CD8-positive, alpha-beta T cell (primary cell): ENCODE measurements at regions of chr16 and their contacts with region 1.

Region 1: GRCh38 chr16:12067714-12068401 is 91.3 kb downstream of the SNX29 start:
- DNase-seq: peak in 8 of 9 experiments; percentile 38 to 80 (median 56)
- ATAC-seq: peak; percentile 96
- H3K4me3 ChIP-seq: no peak overlapping the region
- H3K4me3 Mint-ChIP-seq: no peak overlapping the region
- H3K27ac ChIP-seq: no peak overlapping the region
- H3K27ac Mint-ChIP-seq: no peak overlapping the region
- H3K4me1 ChIP-seq: no peaks in the 10 kb centered on the region
- H3K4me1 Mint-ChIP-seq: peaks cover 4% of the 10 kb centered on the region
- H3K27me3 ChIP-seq: no peaks in the 10 kb centered on the region
- H3K27me3 Mint-ChIP-seq: no peaks in the 10 kb centered on the region
- CTCF ChIP-seq: peak; percentile 85

Region 2: DNA sequence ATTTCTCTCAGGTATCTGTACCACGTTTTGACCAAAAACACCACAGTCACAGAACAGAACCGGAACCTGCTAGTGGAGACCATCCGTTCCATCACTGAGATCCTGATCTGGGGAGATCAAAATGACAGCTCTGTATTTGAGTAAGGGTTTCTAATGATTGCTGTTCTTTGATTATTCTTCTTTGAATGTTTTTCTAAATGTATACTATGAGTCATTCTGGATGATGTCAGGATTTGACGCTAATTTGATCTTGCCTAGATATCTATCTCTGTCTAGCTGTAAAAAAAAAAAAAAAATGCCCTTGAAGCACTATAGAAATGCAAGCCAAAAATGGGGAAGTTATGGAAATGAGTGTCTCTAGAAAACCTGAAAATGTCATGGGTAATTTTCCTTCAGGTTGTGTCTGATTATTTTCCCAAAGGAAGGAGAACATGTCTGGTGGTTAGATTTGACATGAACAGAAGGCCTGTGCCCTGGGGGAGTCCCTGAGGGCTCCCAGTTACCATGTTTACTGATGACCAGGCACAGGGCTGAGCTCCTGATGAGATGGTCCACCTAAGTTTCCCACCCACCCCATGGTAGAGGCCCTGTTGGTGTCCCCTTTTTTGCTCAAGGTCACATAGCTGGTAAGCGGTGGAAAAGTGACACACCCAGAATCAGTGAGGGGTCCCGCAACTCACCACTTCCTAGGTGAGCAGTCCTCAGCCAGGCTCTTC is 1109.9 kb before region 1 on chr16:
- CTCF ChIA-PET with region 1: no interaction called
- POLR2A ChIA-PET with region 1: no interaction called
- intact Hi-C with region 1: loop called in 1 of 2 experiments (anchors 5 kb)
- DNase-seq: no peak
- ATAC-seq: peak; percentile 48
- H3K4me3 ChIP-seq: no peak overlapping the region
- H3K4me3 Mint-ChIP-seq: no peak overlapping the region
- H3K27ac ChIP-seq: no peak overlapping the region
- H3K27ac Mint-ChIP-seq: peak overlapping the region; percentile 47
- H3K4me1 ChIP-seq: peaks cover 14% of the 10 kb centered on the region
- H3K4me1 Mint-ChIP-seq: peaks cover 32% of the 10 kb centered on the region
- H3K27me3 ChIP-seq: no peaks in the 10 kb centered on the region
- H3K27me3 Mint-ChIP-seq: no peaks in the 10 kb centered on the region
- CTCF ChIP-seq: no peak

Region 3: GRCh38 chr16:11757671-11758545 is 309.9 kb before region 1 on chr16:
- CTCF ChIA-PET with region 1: no interaction called
- POLR2A ChIA-PET with region 1: no interaction called
- intact Hi-C with region 1: loop called in 1 of 2 experiments (anchors 10 kb)
- DNase-seq: no peak
- ATAC-seq: no peak
- H3K4me3 ChIP-seq: no peak overlapping the region
- H3K4me3 Mint-ChIP-seq: no peak overlapping the region
- H3K27ac ChIP-seq: no peak overlapping the region
- H3K27ac Mint-ChIP-seq: no peak overlapping the region
- H3K4me1 ChIP-seq: no peaks in the 10 kb centered on the region
- H3K4me1 Mint-ChIP-seq: no peaks in the 10 kb centered on the region
- H3K27me3 ChIP-seq: no peaks in the 10 kb centered on the region
- H3K27me3 Mint-ChIP-seq: no peaks in the 10 kb centered on the region
- CTCF ChIP-seq: no peak

Region 4: GRCh38 chr16:11949527-11949926 is 118.3 kb before region 1 on chr16:
- CTCF ChIA-PET with region 1: interaction called, 37 read pairs
- POLR2A ChIA-PET with region 1: interaction called, 4 read pairs
- intact Hi-C with region 1: loop called (anchors 1 kb)
- DNase-seq: peak in 4 of 9 experiments; percentile 6 to 57 (median 18)
- ATAC-seq: peak; percentile 73
- H3K4me3 ChIP-seq: no peak overlapping the region
- H3K4me3 Mint-ChIP-seq: no peak overlapping the region
- H3K27ac ChIP-seq: no peak overlapping the region
- H3K27ac Mint-ChIP-seq: no peak overlapping the region
- H3K4me1 ChIP-seq: no peaks in the 10 kb centered on the region
- H3K4me1 Mint-ChIP-seq: peaks cover 4% of the 10 kb centered on the region
- H3K27me3 ChIP-seq: no peaks in the 10 kb centered on the region
- H3K27me3 Mint-ChIP-seq: no peaks in the 10 kb centered on the region
- CTCF ChIP-seq: peak; percentile 44

Region 5: GRCh38 chr16:11977376-11978041 is 90.3 kb before region 1 on chr16:
- CTCF ChIA-PET with region 1: interaction called, 16 read pairs
- POLR2A ChIA-PET with region 1: no interaction called
- intact Hi-C with region 1: loop called in 1 of 2 experiments (anchors 10 kb)
- DNase-seq: no peak
- ATAC-seq: no peak
- H3K4me3 ChIP-seq: peak overlapping the region; percentile 65 to 81
- H3K4me3 Mint-ChIP-seq: peak overlapping the region; percentile 91
- H3K27ac ChIP-seq: no peak overlapping the region
- H3K27ac Mint-ChIP-seq: peak overlapping the region; percentile 89
- H3K4me1 ChIP-seq: peaks cover 16% of the 10 kb centered on the region
- H3K4me1 Mint-ChIP-seq: peaks cover 42% of the 10 kb centered on the region
- H3K27me3 ChIP-seq: no peaks in the 10 kb centered on the region
- H3K27me3 Mint-ChIP-seq: no peaks in the 10 kb centered on the region
- CTCF ChIP-seq: no peak

Region 6: DNA sequence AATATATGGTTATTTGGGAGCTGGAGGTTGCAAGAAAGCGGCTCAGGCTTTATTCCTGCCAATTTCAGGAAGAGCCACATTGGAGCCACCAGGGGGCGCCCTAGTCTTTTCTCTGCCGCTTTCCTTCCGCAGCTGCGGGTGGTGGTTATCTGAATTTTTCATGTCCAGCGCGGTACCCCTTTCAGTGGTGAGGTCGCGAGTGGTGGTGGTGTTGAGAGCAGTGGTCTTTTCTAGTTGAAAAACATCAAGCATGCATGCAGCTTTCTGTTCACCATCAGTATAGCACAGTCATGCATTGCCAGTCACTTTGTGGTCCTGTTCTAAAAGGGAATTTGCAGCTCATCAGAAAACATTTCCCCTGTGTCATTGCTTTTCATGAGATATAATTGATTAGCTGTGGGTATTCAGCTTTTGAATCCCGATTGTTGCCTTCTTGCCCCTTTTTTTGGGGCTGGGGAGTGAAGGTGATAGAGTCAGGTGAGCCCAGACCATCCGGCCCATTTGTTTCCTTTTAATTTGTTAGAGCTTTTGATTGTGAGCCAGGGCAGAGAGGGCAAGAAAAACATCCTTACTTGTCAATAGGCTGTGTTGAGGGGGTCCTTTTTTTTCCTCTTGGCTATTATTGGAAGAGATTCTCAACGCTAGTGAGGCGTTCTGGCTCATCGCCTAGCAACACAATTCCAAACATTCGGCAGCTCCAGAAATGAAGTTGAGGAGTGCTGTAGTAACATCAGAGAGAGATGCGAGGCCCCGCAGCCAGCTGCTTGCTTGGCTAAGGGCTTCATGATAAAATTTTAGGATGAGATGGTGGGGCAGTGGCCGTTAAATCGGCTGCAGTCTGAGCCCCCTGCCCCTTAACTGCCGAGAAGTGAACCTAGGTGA is 27.7 kb after region 1 on chr16:
- CTCF ChIA-PET with region 1: interaction called, 52 read pairs
- POLR2A ChIA-PET with region 1: interaction called, 3 read pairs
- intact Hi-C with region 1: no loop called
- DNase-seq: peak in 8 of 9 experiments; percentile 50 to 83 (median 71)
- ATAC-seq: peak; percentile 48
- H3K4me3 ChIP-seq: peak overlapping the region; percentile 10 to 15
- H3K4me3 Mint-ChIP-seq: peak overlapping the region; percentile 73
- H3K27ac ChIP-seq: no peak overlapping the region
- H3K27ac Mint-ChIP-seq: peak overlapping the region; percentile 12
- H3K4me1 ChIP-seq: peaks cover 9% of the 10 kb centered on the region
- H3K4me1 Mint-ChIP-seq: peaks cover 35% of the 10 kb centered on the region
- H3K27me3 ChIP-seq: no peaks in the 10 kb centered on the region
- H3K27me3 Mint-ChIP-seq: no peaks in the 10 kb centered on the region
- CTCF ChIP-seq: peak; percentile 94

Region 7: GRCh38 chr16:12136923-12137322 is 69.1 kb after region 1 on chr16:
- CTCF ChIA-PET with region 1: no interaction called
- POLR2A ChIA-PET with region 1: no interaction called
- intact Hi-C with region 1: no loop called
- DNase-seq: no peak
- ATAC-seq: no peak
- H3K4me3 ChIP-seq: no peak overlapping the region
- H3K4me3 Mint-ChIP-seq: no peak overlapping the region
- H3K27ac ChIP-seq: no peak overlapping the region
- H3K27ac Mint-ChIP-seq: no peak overlapping the region
- H3K4me1 ChIP-seq: no peaks in the 10 kb centered on the region
- H3K4me1 Mint-ChIP-seq: no peaks in the 10 kb centered on the region
- H3K27me3 ChIP-seq: no peaks in the 10 kb centered on the region
- H3K27me3 Mint-ChIP-seq: no peaks in the 10 kb centered on the region
- CTCF ChIP-seq: no peak

Region 8: GRCh38 chr16:12147681-12148080 is 79.8 kb after region 1 on chr16:
- CTCF ChIA-PET with region 1: no interaction called
- POLR2A ChIA-PET with region 1: no interaction called
- intact Hi-C with region 1: no loop called
- DNase-seq: peak in 2 of 9 experiments; percentile 46 to 48
- ATAC-seq: peak; percentile 71
- H3K4me3 ChIP-seq: no peak overlapping the region
- H3K4me3 Mint-ChIP-seq: peak overlapping the region; percentile 37
- H3K27ac ChIP-seq: no peak overlapping the region
- H3K27ac Mint-ChIP-seq: peak overlapping the region; percentile 68
- H3K4me1 ChIP-seq: peaks cover 15% of the 10 kb centered on the region
- H3K4me1 Mint-ChIP-seq: peaks cover 45% of the 10 kb centered on the region
- H3K27me3 ChIP-seq: no peaks in the 10 kb centered on the region
- H3K27me3 Mint-ChIP-seq: no peaks in the 10 kb centered on the region
- CTCF ChIP-seq: no peak

Region 9: DNA sequence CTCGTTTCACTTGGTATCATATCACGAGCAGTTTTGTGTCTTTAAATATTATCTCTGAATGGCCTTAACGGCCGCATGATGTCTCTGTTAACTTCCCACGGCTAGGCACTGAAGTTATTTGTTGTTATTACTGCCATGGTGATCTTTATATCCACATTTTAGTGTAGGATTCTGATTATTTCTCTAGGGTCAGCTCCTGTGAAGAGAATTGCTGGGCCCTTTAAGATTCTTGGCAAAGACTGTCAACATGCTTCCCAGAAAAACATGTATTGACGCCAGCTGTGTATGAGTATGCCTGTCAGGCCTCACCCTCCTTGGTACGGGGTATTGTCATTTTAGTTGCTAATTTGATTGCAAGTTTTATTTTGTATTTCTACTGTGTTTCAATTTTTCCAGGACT is 172.2 kb after region 1 on chr16:
- CTCF ChIA-PET with region 1: no interaction called
- POLR2A ChIA-PET with region 1: no interaction called
- intact Hi-C with region 1: no loop called
- DNase-seq: no peak
- ATAC-seq: no peak
- H3K4me3 ChIP-seq: no peak overlapping the region
- H3K4me3 Mint-ChIP-seq: no peak overlapping the region
- H3K27ac ChIP-seq: no peak overlapping the region
- H3K27ac Mint-ChIP-seq: no peak overlapping the region
- H3K4me1 ChIP-seq: no peaks in the 10 kb centered on the region
- H3K4me1 Mint-ChIP-seq: peaks cover 5% of the 10 kb centered on the region
- H3K27me3 ChIP-seq: no peaks in the 10 kb centered on the region
- H3K27me3 Mint-ChIP-seq: no peaks in the 10 kb centered on the region
- CTCF ChIP-seq: no peak